ENCODE measurements at regions of chr11 and their contacts with region 1.

Region 1: GRCh38 chr11:9384535-9385303 is at the start of gene IPO7:
- DNase-seq: peak; percentile 75 to 91 (median 84)
- ATAC-seq: peak; percentile 98 to 99
- H3K4me3 Mint-ChIP-seq: peak within 1 kb of the TSS; percentile 90 to 97 (median 96)
- H3K27ac Mint-ChIP-seq: peak within 1 kb of the TSS; percentile 81 to 98 (median 94)
- H3K4me1 Mint-ChIP-seq: peaks cover 10 to 41% (median 39%) of the 10 kb centered on the region in 4 donors
- H3K27me3 Mint-ChIP-seq: no peaks in the 10 kb centered on the region
- polyA plus RNA-seq, gene IPO7: 3.7 to 11.2 (median 5.9) TPM

Region 2: GRCh38 chr11:9285850-9286587 is 98.7 kb before region 1 on chr11:
- POLR2A ChIA-PET with region 1: no interaction called
- DNase-seq: no peak
- ATAC-seq: no peak
- H3K4me3 Mint-ChIP-seq: no peak overlapping the region
- H3K27ac Mint-ChIP-seq: peak overlapping the region in 2 of 10 donors; percentile 2 to 4
- H3K4me1 Mint-ChIP-seq: peaks cover 3 to 19% (median 14%) of the 10 kb centered on the region in 4 donors
- H3K27me3 Mint-ChIP-seq: no peaks in the 10 kb centered on the region

Region 3: GRCh38 chr11:9363954-9364912 is 20.5 kb before region 1 on chr11:
- POLR2A ChIA-PET with region 1: interaction called, 19 read pairs
- DNase-seq: peak; percentile 50 to 80 (median 62)
- ATAC-seq: peak; percentile 91 to 95
- H3K4me3 Mint-ChIP-seq: peak overlapping the region; percentile 80 to 91 (median 84)
- H3K27ac Mint-ChIP-seq: peak overlapping the region; percentile 78 to 94 (median 88)
- H3K4me1 Mint-ChIP-seq: peaks cover 0 to 31% (median 9%) of the 10 kb centered on the region in 4 donors
- H3K27me3 Mint-ChIP-seq: no peaks in the 10 kb centered on the region

Region 4: DNA sequence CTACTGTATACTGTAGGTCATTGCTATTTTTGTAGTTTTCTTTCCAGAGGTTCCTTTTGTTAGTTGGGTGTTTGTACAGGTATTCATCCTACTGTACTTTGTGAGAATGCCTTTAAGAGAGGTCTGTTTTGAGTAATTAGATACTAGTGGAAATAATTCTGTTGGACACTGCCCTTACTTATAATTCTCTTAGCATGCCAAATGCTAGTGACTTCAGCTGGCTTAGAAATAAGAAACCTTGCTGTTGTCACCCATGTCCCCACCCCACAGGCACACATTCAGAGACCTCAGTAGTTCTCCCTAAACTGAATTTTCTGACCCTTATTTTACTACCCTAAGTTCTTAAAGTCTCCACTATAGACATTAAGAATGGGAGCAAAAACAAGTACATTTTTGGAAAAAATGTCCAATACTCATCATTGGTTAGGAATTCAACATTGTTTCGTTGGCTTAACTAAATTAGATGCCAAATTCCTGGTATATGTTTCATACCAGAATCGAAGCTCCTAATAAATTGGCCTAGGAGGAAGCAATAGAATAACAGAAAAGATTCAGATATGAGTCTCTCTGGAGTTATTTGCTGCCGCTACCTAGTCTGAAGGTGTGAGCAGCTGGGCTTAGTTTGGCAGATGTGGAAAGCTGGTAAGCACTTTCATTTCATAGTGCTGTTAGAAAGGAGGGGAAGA is 104.5 kb after region 1 on chr11:
- POLR2A ChIA-PET with region 1: no interaction called
- DNase-seq: no peak
- ATAC-seq: no peak
- H3K4me3 Mint-ChIP-seq: no peak overlapping the region
- H3K27ac Mint-ChIP-seq: peak overlapping the region in 2 of 10 donors; percentile 12 to 14
- H3K4me1 Mint-ChIP-seq: peaks cover 0 to 2% (median 1%) of the 10 kb centered on the region in 4 donors
- H3K27me3 Mint-ChIP-seq: no peaks in the 10 kb centered on the region